ENCODE measurements at regions of chr10 and their contacts with region 1.

Region 1: DNA sequence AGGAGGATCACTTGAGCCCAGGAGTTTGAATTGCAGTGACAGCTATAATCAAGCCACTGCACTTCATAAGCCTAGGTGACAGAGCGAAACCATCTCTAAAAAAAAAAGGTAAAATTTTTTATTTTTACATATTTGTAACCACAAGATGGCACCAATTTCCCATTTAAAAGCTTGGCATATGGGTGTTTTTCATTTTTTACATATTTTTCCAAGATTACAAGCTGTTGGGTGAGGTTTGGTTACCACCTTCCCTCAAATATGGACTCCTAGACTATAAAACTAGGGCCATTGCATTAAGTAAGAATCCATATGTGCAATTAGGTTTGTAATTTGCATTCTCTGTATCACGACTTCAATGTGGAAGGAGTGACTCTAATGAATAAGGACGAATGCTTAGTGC is 129.3 kb upstream of the ACBD5 start:
- DNase-seq: peak in 1 of 14 experiments; percentile 2
- ATAC-seq: no peak
- H3K4me3 ChIP-seq: no peak overlapping the region
- H3K4me3 Mint-ChIP-seq: no peak overlapping the region
- H3K27ac ChIP-seq: no peak overlapping the region
- H3K27ac Mint-ChIP-seq: no peak overlapping the region
- H3K4me1 ChIP-seq: no peaks in the 10 kb centered on the region
- H3K4me1 Mint-ChIP-seq: no peaks in the 10 kb centered on the region
- H3K27me3 ChIP-seq: no peaks in the 10 kb centered on the region
- H3K27me3 Mint-ChIP-seq: no peaks in the 10 kb centered on the region
- CTCF ChIP-seq: peak; percentile 32

Region 2: DNA sequence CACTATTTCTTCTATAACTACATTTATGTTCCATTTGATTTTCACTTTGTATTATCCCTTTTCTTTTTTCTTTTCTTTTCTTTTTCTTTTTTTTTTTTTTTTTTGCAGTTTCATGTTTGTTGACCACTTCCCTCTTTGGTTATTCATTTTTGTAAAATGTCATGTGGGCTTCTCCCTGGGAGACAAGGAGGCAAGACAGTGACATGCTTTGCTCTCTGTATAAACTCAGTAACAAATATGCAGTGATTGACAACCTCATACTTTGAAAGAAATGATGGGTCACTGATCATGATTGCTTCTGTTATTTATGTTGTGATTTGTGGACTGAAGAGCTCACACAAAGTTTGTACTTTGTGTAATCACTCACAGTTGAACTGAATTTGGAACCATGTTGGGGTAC is 418.9 kb before region 1 on chr10:
- CTCF ChIA-PET with region 1: no interaction called
- POLR2A ChIA-PET with region 1: no interaction called
- intact Hi-C with region 1: no loop called
- DNase-seq: no peak
- ATAC-seq: no peak
- H3K4me3 ChIP-seq: no peak overlapping the region
- H3K4me3 Mint-ChIP-seq: no peak overlapping the region
- H3K27ac ChIP-seq: no peak overlapping the region
- H3K27ac Mint-ChIP-seq: no peak overlapping the region
- H3K4me1 ChIP-seq: no peaks in the 10 kb centered on the region
- H3K4me1 Mint-ChIP-seq: no peaks in the 10 kb centered on the region
- H3K27me3 ChIP-seq: peaks cover 0 to 3% of the 10 kb centered on the region in 2 experiments
- H3K27me3 Mint-ChIP-seq: peaks cover 15% of the 10 kb centered on the region
- CTCF ChIP-seq: no peak

Region 3: GRCh38 chr10:27345455-27345920 is 24.4 kb before region 1 on chr10:
- CTCF ChIA-PET with region 1: no interaction called
- POLR2A ChIA-PET with region 1: no interaction called
- intact Hi-C with region 1: no loop called
- DNase-seq: no peak
- ATAC-seq: no peak
- H3K4me3 ChIP-seq: no peak overlapping the region
- H3K4me3 Mint-ChIP-seq: no peak overlapping the region
- H3K27ac ChIP-seq: no peak overlapping the region
- H3K27ac Mint-ChIP-seq: no peak overlapping the region
- H3K4me1 ChIP-seq: no peaks in the 10 kb centered on the region
- H3K4me1 Mint-ChIP-seq: no peaks in the 10 kb centered on the region
- H3K27me3 ChIP-seq: peaks cover 0 to 6% of the 10 kb centered on the region in 2 experiments
- H3K27me3 Mint-ChIP-seq: peaks cover 15% of the 10 kb centered on the region
- CTCF ChIP-seq: no peak

Region 4: DNA sequence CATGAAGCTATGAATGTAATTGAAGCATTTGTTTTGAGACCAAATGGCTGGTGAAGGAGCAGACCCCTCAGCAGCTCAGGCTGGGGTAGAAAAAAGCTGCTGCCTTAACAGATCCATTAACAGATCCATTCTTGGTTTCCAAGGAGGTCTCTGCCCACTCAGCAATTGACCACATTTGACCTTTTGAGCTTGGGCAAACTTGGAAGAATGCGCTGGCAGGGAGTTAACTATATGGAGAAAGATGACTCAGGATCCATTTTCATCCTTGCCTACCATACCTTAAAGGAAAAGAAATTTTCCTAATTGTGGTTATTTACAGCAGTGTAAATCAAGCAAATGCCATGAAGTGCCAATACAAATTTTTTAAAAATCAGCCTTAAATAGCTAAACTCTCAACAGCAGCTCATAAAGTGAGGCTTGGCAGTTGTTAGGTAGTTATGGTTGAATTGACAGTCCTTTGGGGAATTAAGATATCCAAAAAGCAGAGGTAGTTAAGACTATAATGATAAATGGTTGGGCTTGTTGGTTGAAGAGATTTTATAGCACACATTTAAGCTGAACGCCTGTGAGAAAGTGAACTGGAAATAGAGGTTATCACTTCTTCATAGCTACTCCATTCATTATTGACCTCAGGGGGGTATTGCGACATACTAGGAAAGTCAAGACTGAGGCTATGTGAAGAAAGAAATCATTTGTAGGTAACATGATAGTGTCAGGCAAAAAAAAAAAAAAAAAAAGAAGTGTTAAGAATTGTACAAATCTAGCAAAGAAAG is 291.8 kb after region 1 on chr10:
- CTCF ChIA-PET with region 1: no interaction called
- POLR2A ChIA-PET with region 1: no interaction called
- intact Hi-C with region 1: loop called (anchors 2 to 5 kb)
- DNase-seq: no peak
- ATAC-seq: no peak
- H3K4me3 ChIP-seq: no peak overlapping the region
- H3K4me3 Mint-ChIP-seq: no peak overlapping the region
- H3K27ac ChIP-seq: no peak overlapping the region
- H3K27ac Mint-ChIP-seq: no peak overlapping the region
- H3K4me1 ChIP-seq: no peaks in the 10 kb centered on the region
- H3K4me1 Mint-ChIP-seq: no peaks in the 10 kb centered on the region
- H3K27me3 ChIP-seq: peaks cover 3 to 24% of the 10 kb centered on the region in 2 experiments
- H3K27me3 Mint-ChIP-seq: peaks cover 45% of the 10 kb centered on the region
- CTCF ChIP-seq: no peak